ENCODE measurements at regions of chr10 and their contacts with region 1.

Region 1: GRCh38 chr10:77173615-77174461 is 463.8 kb downstream of the KCNMA1 start:
- DNase-seq: peak; percentile 72 to 91
- H3K4me3 ChIP-seq: no peak overlapping the region
- H3K27ac ChIP-seq: no peak overlapping the region
- H3K4me1 ChIP-seq: no peaks in the 10 kb centered on the region
- H3K27me3 ChIP-seq: no peaks in the 10 kb centered on the region
- CTCF ChIP-seq: peak; percentile 59 to 96 (median 92)
- EP300 ChIP-seq: no peak
- POLR2A ChIP-seq: no peak
- RAD21 ChIP-seq: peak; percentile 93 to 98

Region 2: DNA sequence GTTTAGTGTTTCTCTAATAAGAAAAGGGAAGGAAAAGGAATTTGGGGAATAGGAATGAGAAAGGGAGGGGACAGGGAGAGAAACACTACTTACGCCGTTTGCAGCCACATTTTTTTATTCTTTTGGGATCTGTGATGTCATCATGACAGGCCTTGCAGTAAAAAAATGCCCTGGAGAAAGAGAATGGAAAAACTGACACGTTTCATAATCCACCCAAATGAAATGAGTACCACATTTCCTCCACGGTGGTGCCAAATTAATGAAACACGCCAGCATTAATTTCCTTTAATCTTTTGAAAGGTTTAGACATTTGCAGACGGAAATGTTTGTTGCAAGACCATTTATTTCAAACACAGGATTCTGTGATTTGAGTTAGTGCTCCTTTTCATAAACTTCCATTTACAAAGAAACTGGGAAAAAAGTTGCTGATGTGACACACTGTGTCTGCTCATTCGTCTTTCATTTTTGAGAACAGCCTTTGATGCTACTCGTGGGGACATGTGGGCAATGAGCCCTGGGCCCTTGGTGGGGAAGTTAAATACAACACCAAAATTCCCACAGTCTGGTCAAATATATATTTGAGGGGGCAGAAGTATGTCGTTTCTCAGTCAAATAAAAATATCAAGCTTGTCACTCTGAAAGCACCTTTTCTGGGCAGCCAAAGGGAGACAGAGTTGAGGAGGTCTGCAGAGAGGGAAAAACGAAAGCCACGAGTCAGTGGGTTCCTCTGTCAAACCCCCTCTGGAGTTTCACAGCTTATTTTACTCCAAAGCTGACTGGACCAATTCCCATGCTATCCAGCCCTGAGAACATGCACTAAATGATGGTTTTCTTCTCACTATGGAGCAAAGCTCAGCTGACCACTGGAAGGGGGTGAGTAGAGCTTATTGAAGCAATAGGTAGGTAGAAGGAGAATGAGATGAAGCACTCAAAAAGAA is 161.7 kb before region 1 on chr10:
- CTCF ChIA-PET with region 1: no interaction called
- POLR2A ChIA-PET with region 1: no interaction called
- DNase-seq: no peak
- H3K4me3 ChIP-seq: no peak overlapping the region
- H3K27ac ChIP-seq: no peak overlapping the region
- H3K4me1 ChIP-seq: no peaks in the 10 kb centered on the region
- H3K27me3 ChIP-seq: no peaks in the 10 kb centered on the region
- CTCF ChIP-seq: no peak
- EP300 ChIP-seq: no peak
- POLR2A ChIP-seq: no peak
- RAD21 ChIP-seq: no peak

Region 3: DNA sequence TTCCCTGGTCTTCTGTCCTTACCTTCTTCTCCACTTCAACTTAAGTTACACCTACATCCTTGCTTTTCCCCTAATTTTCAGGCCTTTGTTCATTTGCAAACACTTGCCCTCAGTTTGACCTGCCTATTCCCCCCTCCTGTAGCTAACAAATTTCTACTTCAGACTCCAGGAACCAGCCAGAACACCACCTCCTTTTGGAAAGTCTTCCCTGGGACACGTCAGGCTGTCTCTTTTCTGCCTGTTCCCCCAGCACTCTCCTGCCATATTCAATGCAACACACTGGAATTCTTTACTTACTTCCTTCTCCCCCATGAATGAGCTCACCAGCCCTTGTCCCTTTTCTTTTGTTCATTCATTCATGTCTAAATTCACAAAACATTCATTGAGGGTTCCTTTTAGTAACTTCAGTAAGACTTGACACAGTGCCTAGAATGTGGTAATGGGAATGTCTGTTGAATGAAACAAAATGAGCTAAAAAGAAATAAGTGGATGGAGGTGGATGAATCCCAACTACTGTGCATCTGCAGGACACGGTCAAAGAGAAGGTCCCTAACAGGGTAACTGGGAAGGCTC is 14.2 kb before region 1 on chr10:
- CTCF ChIA-PET with region 1: interaction called, 32 read pairs
- POLR2A ChIA-PET with region 1: no interaction called
- DNase-seq: no peak
- H3K4me3 ChIP-seq: no peak overlapping the region
- H3K27ac ChIP-seq: no peak overlapping the region
- H3K4me1 ChIP-seq: peaks cover 0 to 7% (median 0%) of the 10 kb centered on the region in 4 experiments; a peak in 1 of 7 replicates
- H3K27me3 ChIP-seq: no peaks in the 10 kb centered on the region
- CTCF ChIP-seq: no peak
- EP300 ChIP-seq: no peak
- POLR2A ChIP-seq: no peak
- RAD21 ChIP-seq: no peak

Region 4: GRCh38 chr10:77244746-77245145 is 70.9 kb after region 1 on chr10:
- CTCF ChIA-PET with region 1: interaction called, 34 read pairs
- POLR2A ChIA-PET with region 1: no interaction called
- DNase-seq: no peak
- H3K4me3 ChIP-seq: no peak overlapping the region
- H3K27ac ChIP-seq: no peak overlapping the region
- H3K4me1 ChIP-seq: peaks cover 0 to 4% (median 0%) of the 10 kb centered on the region in 4 experiments; a peak in 1 of 7 replicates
- H3K27me3 ChIP-seq: no peaks in the 10 kb centered on the region; a peak in 1 of 7 replicates
- CTCF ChIP-seq: no peak
- EP300 ChIP-seq: no peak
- POLR2A ChIP-seq: no peak
- RAD21 ChIP-seq: no peak

Region 5: DNA sequence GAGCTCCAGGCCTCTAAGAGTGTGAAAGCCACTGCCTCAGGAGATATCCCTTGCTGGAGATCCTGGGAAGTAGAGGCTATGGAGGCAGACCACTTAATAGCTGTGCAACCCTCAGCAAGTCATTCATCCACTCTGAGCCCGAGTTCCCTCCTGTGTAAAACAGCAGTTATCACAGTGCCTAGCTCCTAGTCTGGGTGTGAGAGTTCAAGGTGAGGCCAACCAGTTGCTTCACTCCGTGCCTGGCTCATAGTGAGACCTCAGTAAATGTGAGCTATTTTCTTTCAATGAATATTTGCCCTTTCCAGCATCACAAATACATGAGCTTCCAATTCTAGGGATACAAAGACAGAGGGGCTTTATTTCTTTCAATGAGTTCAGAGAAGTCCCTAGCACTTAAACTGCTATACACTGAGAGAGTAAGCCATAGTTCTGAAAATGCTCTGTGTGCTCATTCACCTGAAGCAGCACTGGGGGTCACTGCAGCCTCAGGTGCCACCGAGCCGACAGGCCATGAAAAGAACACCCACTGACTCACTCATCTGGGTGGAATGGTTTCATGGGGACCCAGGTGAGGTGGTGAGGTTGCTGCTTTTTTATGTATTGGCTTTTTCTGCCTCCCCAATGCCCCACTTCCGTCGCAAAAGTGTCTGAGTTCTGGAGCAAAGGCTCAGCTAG is 204.0 kb after region 1 on chr10:
- CTCF ChIA-PET with region 1: interaction called, 13 read pairs
- POLR2A ChIA-PET with region 1: no interaction called
- DNase-seq: no peak
- H3K4me3 ChIP-seq: no peak overlapping the region
- H3K27ac ChIP-seq: no peak overlapping the region
- H3K4me1 ChIP-seq: no peaks in the 10 kb centered on the region
- H3K27me3 ChIP-seq: no peaks in the 10 kb centered on the region
- CTCF ChIP-seq: peak; percentile 42 to 56 (median 44)
- EP300 ChIP-seq: no peak
- POLR2A ChIP-seq: no peak
- RAD21 ChIP-seq: peak; percentile 81 to 85

Region 6: GRCh38 chr10:77494327-77494726 is 320.5 kb after region 1 on chr10:
- CTCF ChIA-PET with region 1: interaction called, 13 read pairs
- POLR2A ChIA-PET with region 1: no interaction called
- DNase-seq: no peak
- H3K4me3 ChIP-seq: no peak overlapping the region
- H3K27ac ChIP-seq: no peak overlapping the region
- H3K4me1 ChIP-seq: peaks cover 2 to 4% (median 3%) of the 10 kb centered on the region in 4 experiments; a peak in 3 of 7 replicates
- H3K27me3 ChIP-seq: no peaks in the 10 kb centered on the region
- CTCF ChIP-seq: peak; percentile 53 to 67 (median 66)
- EP300 ChIP-seq: no peak
- POLR2A ChIP-seq: no peak
- RAD21 ChIP-seq: peak; percentile 76 to 79

Region 7: DNA sequence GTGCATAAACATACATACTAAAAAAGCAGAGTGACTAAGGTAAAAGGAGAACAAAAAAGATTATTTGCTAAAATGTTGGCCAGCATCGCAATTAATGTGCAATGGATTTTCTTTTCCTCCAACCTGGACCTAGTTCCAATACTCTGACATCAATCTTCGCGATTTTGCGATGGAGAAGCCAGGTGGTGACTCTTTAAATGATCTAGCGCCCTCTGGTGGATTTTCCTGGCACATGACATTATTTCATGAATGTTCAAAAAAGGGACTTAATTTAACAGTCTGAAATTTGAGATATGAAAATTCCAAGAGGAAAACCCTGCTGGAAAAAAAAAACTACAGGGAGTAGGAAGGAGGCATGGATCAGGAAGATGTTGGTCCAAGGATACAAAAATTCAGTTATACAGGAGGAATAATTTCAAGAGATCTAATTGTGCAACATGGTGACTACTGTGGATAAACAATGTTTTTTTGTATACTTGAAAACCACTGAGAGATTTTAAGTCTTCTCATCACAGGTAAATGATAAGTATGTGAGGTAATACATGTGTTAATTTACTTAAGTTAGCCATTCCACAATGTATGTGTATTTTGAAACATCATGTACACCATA is 468.1 kb after region 1 on chr10:
- CTCF ChIA-PET with region 1: interaction called, 96 read pairs
- POLR2A ChIA-PET with region 1: interaction called, 3 read pairs
- DNase-seq: peak in 1 of 2 experiments; percentile 71
- H3K4me3 ChIP-seq: no peak overlapping the region
- H3K27ac ChIP-seq: no peak overlapping the region
- H3K4me1 ChIP-seq: peaks cover 0 to 6% (median 4%) of the 10 kb centered on the region in 4 experiments; a peak in 6 of 7 replicates
- H3K27me3 ChIP-seq: peaks cover 11 to 37% (median 34%) of the 10 kb centered on the region in 4 experiments
- CTCF ChIP-seq: peak in 2 of 3 experiments; percentile 69 to 71; a peak in 3 of 4 replicates
- EP300 ChIP-seq: no peak
- POLR2A ChIP-seq: no peak
- RAD21 ChIP-seq: peak; percentile 87 to 89

Measured in H1 (cell line).